T-cell (primary cell): ENCODE measurements at regions of chr6 and their contacts with region 1.

Region 1: DNA sequence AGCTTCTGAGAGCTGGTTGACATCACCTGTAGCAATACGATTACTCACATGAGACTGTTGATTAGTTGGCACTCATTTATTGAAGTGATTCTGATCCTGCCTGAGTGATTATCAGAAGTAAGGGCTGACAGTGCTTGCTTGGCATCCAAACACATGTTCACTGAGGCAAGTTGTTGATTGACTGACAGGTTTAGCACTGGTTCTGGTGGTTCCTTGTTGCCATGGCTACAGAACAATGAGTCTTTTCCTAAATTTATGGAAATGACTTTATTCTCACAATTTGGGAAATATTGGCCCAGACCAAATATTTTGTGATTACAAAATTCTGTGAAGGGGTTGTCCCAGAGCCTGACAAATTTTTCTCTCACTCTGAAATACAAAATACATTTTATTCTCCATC is 146.0 kb upstream of the RAB32 start:
- DNase-seq: no peak
- ATAC-seq: no peak
- H3K4me3 ChIP-seq: no peak overlapping the region
- H3K4me3 Mint-ChIP-seq: no peak overlapping the region
- H3K27ac ChIP-seq: no peak overlapping the region
- H3K27ac Mint-ChIP-seq: no peak overlapping the region
- H3K4me1 ChIP-seq: no peaks in the 10 kb centered on the region
- H3K4me1 Mint-ChIP-seq: no peaks in the 10 kb centered on the region
- H3K27me3 ChIP-seq: no peaks in the 10 kb centered on the region
- H3K27me3 Mint-ChIP-seq: peaks cover 0 to 4% of the 10 kb centered on the region in 2 donors

Region 2: GRCh38 chr6:146281651-146282362 is 115.8 kb before region 1 on chr6:
- CTCF ChIA-PET with region 1: no interaction called
- POLR2A ChIA-PET with region 1: interaction called in 1 of 2 experiments, 10 read pairs
- DNase-seq: no peak
- ATAC-seq: no peak
- H3K4me3 ChIP-seq: no peak overlapping the region
- H3K4me3 Mint-ChIP-seq: no peak overlapping the region
- H3K27ac ChIP-seq: no peak overlapping the region
- H3K27ac Mint-ChIP-seq: no peak overlapping the region
- H3K4me1 ChIP-seq: no peaks in the 10 kb centered on the region
- H3K4me1 Mint-ChIP-seq: no peaks in the 10 kb centered on the region
- H3K27me3 ChIP-seq: no peaks in the 10 kb centered on the region
- H3K27me3 Mint-ChIP-seq: no peaks in the 10 kb centered on the region